K562 (cell line): ENCODE measurements at regions of chr1 and their contacts with region 1.

Region 1: DNA sequence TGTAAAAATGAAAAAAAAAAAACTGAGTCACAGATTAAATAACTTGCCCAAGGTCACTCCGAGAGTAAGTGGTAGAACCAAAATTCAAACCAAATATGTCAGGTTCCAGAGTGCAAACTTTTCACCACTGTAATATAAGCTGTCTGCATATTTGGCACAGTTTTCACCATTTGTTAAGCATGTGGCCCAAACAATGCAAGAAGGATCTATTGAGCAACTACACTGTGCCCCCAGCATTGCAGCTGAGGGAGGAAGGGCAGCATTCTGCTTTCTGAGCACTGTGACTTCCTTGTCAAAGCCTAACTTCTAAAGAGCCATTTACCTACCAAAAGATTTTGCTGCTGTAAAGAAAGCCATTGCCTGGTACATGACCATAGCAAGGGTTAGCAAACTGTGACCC is 133.4 kb downstream of the SYT2 start:
- DNase-seq: no peak
- ATAC-seq: no peak; the same call in 2 of the 3 replicates
- H3K4me3 ChIP-seq: no peak overlapping the region
- H3K27ac ChIP-seq: no peak overlapping the region
- H3K4me1 ChIP-seq: peaks cover 0 to 10% of the 10 kb centered on the region in 2 experiments; a peak in 2 of 5 replicates
- H3K27me3 ChIP-seq: no peaks in the 10 kb centered on the region
- CTCF ChIP-seq: no peak
- EP300 ChIP-seq: no peak
- POLR2A ChIP-seq: no peak
- RAD21 ChIP-seq: no peak

Region 2: DNA sequence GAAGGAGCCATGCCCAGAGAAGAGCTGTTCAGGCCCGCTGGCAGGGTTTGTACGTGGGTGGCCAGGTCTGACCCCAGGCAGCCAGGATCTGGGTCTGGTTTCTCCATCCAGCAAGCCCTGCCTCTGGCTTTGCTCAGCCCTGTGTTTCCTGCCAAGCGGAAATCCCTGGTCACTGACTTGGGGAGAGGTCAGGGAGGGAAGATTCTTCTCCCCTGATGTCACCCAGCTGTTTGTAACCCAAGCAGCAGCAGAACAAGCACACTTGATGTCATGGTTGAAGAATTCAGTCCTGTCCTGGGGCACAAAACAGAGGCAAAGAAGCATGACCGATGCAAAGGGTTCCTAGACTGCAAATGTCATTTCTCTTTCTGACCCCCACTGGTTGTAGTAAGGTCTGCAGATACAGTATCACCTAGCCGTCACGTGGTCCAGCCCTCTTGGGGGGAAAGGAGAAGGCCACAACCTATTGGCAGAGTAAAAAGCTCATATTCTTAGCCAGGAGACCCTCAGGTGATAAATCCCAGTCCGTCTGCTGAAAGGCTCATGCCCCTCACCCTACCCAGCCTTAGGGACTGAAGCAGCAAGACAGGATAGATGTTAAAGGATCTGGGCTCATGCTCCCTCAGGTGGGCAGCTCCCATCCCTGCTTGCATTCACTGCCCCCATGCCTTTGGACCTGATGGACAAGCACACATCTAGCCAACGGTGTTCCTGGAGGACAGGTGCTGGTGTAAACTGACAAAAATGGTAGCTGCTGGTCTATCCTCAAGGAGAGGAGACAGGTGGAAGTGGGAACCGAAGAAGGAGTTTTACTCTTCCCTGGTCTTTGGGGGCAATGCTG is 12.6 kb after region 1 on chr1:
- CTCF ChIA-PET with region 1: no interaction called
- POLR2A ChIA-PET with region 1: interaction called, 12 read pairs
- in situ Hi-C with region 1: no loop called
- intact Hi-C with region 1: no loop called
- DNase-seq: no peak
- ATAC-seq: no peak; the same call in 1 of the 3 replicates
- H3K4me3 ChIP-seq: no peak overlapping the region
- H3K27ac ChIP-seq: no peak overlapping the region
- H3K4me1 ChIP-seq: peaks cover 4 to 18% of the 10 kb centered on the region in 2 experiments; a peak in 4 of 5 replicates
- H3K27me3 ChIP-seq: no peaks in the 10 kb centered on the region
- CTCF ChIP-seq: no peak
- EP300 ChIP-seq: no peak
- POLR2A ChIP-seq: no peak
- RAD21 ChIP-seq: no peak